ENCODE measurements at regions of chr15 and their contacts with region 1.

Region 1: DNA sequence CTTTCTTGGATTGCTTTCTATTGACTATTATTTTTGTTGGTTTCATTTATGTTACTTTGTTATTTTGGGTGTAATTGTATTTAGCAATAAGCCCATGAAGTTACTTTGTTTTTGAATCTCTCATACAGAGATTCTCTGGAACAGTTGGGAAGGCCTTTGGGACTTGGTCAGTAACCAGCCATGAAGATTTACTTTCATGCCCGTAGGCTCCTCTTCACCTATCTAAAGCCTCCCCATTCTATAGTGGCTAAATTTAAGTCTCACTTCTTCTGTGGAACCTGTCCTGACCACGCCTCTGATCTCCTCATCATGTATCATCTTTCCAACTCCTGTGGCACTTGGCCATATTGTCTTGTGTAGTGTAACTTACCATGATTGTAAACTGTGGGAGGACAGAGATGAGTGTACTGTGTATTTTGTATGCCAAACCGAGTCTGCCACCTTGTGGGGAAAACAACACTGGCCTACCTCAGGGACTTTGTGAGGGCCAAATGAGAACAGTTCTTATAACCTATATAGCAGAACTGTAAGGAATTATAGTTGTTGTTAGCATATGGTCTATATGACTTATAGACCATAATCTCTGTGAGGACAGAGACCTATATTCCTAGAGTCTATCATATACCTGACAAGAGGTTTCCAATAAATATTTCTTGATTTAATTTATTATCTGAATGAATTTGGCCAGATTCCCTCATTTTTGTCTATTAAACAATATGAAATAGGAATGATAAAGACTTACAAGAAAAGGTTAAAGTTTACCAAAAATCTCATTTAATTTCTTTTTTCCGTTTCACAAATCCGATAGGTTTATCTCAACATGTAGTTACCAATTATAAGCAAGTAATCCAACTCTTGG is 75.0 kb downstream of the STARD9 start:
- DNase-seq: peak; percentile 55 to 57
- ATAC-seq: peak; percentile 95 to 99
- H3K4me3 ChIP-seq: no peak overlapping the region
- H3K27ac ChIP-seq: peak overlapping the region in 1 of 4 donors; percentile 11
- H3K4me1 ChIP-seq: no peaks in the 10 kb centered on the region
- H3K27me3 ChIP-seq: no peaks in the 10 kb centered on the region
- CTCF ChIP-seq: peak; percentile 47 to 78 (median 62)
- POLR2A ChIP-seq: no peak

Region 2: GRCh38 chr15:42065033-42065432 is 585.4 kb before region 1 on chr15:
- in situ Hi-C with region 1: no loop called
- intact Hi-C with region 1: loop called (anchors 5 kb)
- DNase-seq: no peak
- ATAC-seq: no peak
- H3K4me3 ChIP-seq: no peak overlapping the region
- H3K27ac ChIP-seq: no peak overlapping the region
- H3K4me1 ChIP-seq: peaks cover 0 to 2% of the 10 kb centered on the region in 2 donors
- H3K27me3 ChIP-seq: no peaks in the 10 kb centered on the region
- CTCF ChIP-seq: no peak
- POLR2A ChIP-seq: no peak

Region 3: GRCh38 chr15:42495361-42496212 is 154.8 kb before region 1 on chr15 and contains the start of gene SNAP23:
- in situ Hi-C with region 1: no loop called
- intact Hi-C with region 1: loop called (anchors 5 kb)
- DNase-seq: peak; percentile 94 to 96
- ATAC-seq: peak; percentile 85 to 90
- H3K4me3 ChIP-seq: peak within 1 kb of the TSS; percentile 73 to 92 (median 84)
- H3K27ac ChIP-seq: peak within 1 kb of the TSS; percentile 88 to 97 (median 96)
- H3K4me1 ChIP-seq: peaks cover 41 to 52% of the 10 kb centered on the region in 2 donors
- H3K27me3 ChIP-seq: no peaks in the 10 kb centered on the region
- CTCF ChIP-seq: no peak
- POLR2A ChIP-seq: peak; percentile 95 to 99
- total RNA-seq, gene SNAP23: 26.7 to 74.3 (median 40.2) TPM

Region 4: DNA sequence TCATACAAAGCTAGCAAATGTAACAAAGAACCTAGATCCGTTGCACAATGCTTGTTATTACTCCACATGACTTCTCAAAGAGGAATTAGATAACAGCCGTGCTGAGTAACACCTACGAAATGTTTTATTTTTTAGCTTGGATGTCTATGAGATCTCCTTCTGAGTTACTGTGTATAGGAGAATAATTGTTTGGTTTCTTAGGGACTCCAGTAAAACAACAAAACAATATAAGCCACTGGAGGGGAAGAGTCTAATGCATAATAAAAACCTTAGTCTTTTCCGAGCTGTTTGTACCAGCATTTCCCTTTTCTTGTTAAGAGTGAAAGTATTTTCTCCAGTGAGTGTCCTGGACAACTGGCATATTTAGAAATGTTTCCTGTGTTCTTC is 139.4 kb before region 1 on chr15:
- in situ Hi-C with region 1: no loop called
- intact Hi-C with region 1: no loop called
- DNase-seq: no peak
- ATAC-seq: peak; percentile 27 to 74
- H3K4me3 ChIP-seq: no peak overlapping the region
- H3K27ac ChIP-seq: peak overlapping the region; percentile 12 to 51 (median 16)
- H3K4me1 ChIP-seq: peaks cover 21 to 25% of the 10 kb centered on the region in 2 donors
- H3K27me3 ChIP-seq: no peaks in the 10 kb centered on the region
- CTCF ChIP-seq: no peak
- POLR2A ChIP-seq: no peak

Region 5: DNA sequence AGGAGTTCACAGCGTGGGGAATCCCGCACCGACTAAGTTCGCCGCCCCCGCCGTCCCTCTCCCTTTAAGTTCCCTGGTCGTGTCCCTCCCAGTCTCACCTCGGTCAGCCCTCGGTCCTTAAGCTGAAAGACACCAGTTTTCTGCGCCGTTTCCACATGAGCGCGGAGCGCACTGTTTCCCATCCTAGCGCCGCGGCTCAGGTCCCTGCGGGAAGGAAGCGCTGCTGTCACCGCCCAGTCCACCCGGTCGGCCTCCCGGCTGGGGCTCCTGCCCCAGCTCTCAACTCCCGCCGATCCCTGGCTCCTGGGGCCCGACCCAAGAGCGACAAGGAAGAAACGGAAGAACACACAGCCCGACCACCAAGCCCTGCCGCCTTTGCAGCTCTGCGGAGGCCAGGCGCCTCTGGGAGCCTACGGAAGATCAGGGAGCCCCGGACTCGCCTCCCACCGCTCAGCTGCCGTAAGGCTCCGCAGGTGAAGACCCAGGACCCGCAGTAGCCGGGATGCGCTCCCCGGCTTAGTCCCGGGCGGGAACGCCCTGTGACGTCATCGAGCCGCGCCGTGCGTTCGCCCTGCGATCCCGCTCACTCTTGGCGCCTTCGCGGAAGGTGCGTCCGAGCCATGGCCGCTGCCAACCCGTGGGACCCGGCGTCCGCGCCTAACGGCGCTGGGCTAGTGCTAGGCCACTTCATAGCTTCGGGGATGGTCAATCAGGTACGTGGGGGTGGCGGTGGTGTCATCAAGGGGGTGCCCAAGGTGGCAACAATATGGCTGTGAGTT is 102.0 kb before region 1 on chr15 and contains the starts of genes HAUS2 and LRRC57:
- in situ Hi-C with region 1: loop called in 1 of 4 experiments (anchors 10 kb)
- intact Hi-C with region 1: loop called (anchors 1 kb)
- DNase-seq: peak; percentile 70 to 74
- ATAC-seq: peak; percentile 87 to 92
- H3K4me3 ChIP-seq: peak within 1 kb of the TSS; percentile 79 to 100 (median 88)
- H3K27ac ChIP-seq: peak within 1 kb of the TSS; percentile 84 to 95 (median 90)
- H3K4me1 ChIP-seq: peaks cover 27 to 30% of the 10 kb centered on the region in 2 donors
- H3K27me3 ChIP-seq: no peaks in the 10 kb centered on the region
- CTCF ChIP-seq: peak in 1 of 5 experiments; percentile 27
- POLR2A ChIP-seq: peak; percentile 80 to 82
- total RNA-seq, gene HAUS2: 24.7 to 31.9 (median 27.8) TPM
- total RNA-seq, gene LRRC57: 6.0 to 15.4 (median 10.0) TPM

Region 6: DNA sequence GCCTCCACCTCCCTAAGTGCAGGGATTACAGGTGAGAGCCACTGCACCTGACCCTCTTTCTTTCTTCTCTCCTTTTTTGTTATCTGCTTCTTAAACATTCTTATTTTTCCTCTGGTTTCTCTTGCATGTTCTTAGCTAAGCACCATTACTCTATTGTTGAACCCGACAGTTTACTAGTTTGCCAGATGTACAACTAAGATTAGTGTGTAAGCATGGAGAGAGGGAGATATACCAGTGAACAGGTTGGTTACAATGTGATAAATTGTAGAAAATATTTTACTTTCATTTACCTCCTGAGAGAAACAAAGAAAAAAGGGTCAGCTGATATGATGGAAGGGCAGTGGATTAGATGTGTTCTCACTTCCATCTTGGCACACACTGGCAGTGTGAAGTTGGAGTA is 96.9 kb before region 1 on chr15:
- in situ Hi-C with region 1: loop called in 1 of 4 experiments (anchors 10 kb)
- intact Hi-C with region 1: loop called (anchors 1 kb)
- DNase-seq: no peak
- ATAC-seq: no peak
- H3K4me3 ChIP-seq: no peak overlapping the region
- H3K27ac ChIP-seq: no peak overlapping the region
- H3K4me1 ChIP-seq: peaks cover 7 to 9% of the 10 kb centered on the region in 2 donors
- H3K27me3 ChIP-seq: no peaks in the 10 kb centered on the region
- CTCF ChIP-seq: no peak
- POLR2A ChIP-seq: no peak

Region 7: DNA sequence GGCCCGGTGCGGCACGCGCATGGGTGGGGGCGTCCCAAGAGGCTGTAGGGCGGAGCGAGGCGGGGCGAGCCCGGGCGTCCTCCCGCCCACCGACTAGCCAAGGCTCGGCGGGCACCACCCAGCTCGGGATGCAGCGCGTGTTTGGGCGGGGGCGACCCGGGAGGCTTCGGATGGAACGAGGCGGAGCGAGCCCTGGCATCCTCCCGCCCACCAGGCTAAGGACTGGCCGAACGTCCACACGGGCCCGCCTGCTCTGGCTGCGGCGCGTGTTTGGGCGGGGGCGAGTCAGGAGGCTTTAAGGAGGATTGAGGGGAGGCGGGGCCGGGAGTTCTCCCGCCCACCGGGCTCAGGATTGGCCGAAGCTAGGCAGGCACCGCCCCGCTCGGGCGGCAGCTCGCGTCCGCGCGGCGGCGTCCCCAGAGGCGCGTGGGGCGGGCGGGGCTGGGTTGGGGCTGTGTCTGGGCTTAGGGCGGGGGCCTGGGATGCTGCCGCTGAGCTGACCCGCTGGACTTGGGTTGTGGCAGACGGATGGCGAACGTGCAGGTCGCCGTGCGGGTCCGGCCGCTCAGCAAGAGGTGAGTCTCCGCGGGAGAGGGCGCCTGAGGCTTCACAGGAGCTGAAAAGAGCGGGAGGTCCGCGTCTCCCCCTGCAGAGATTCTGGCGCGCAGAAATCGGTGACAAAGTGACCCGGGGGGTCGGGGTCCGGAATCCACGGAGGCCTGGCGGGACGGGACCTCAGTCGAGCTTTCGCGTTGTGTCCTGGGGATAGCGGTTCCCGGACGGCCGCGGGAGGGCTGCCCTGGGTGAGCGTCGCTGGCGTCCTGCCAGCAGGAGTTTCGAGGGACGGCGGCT is 75.0 kb before region 1 on chr15 and contains the start of gene STARD9:
- in situ Hi-C with region 1: no loop called
- intact Hi-C with region 1: loop called (anchors 2 kb)
- DNase-seq: peak; percentile 96 to 98
- ATAC-seq: peak; percentile 95 to 96
- H3K4me3 ChIP-seq: peak within 1 kb of the TSS; percentile 85 to 97 (median 91)
- H3K27ac ChIP-seq: peak within 1 kb of the TSS; percentile 85 to 93 (median 87)
- H3K4me1 ChIP-seq: peaks cover 14 to 15% of the 10 kb centered on the region in 2 donors
- H3K27me3 ChIP-seq: peaks cover 0 to 5% (median 0%) of the 10 kb centered on the region in 3 donors
- CTCF ChIP-seq: peak in 1 of 5 experiments; percentile 10
- POLR2A ChIP-seq: peak; percentile 56 to 87
- total RNA-seq, gene STARD9: 1.6 to 3.5 (median 2.0) TPM